ENCODE measurements at regions of chr11 and their contacts with region 1.

Region 1: GRCh38 chr11:78465169-78465942 is 47.7 kb upstream of the GAB2 start:
- DNase-seq: peak; percentile 93
- ATAC-seq: peak; percentile 100
- H3K4me3 ChIP-seq: peak overlapping the region; percentile 35; the same call in 1 of the 2 replicates
- H3K27ac ChIP-seq: peak overlapping the region; percentile 90
- H3K4me1 ChIP-seq: peaks cover 26% of the 10 kb centered on the region
- H3K27me3 ChIP-seq: no peaks in the 10 kb centered on the region
- CTCF ChIP-seq: no peak
- EP300 ChIP-seq: peak; percentile 63 to 84
- POLR2A ChIP-seq: peak; percentile 78
- RAD21 ChIP-seq: no peak

Region 2: DNA sequence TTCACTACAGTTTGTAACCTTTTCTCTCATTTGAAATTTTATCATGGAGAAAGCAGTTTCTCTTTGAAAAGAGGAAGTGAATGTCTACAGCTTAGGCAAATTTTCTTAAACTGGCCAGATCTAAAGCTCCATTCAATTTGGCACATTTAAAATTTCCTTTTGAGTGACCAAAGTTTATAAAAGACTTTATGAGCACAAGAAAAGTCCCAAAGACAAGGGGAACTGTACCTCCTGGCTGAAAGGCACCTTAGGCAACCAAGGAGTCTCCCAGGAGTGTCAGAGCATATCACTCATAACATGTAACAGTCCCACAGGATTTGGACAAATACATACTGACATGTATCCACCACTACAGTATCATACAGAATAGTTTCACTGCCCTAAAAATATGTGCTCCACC is 68.0 kb after region 1 on chr11:
- CTCF ChIA-PET with region 1: interaction called, 4 read pairs
- POLR2A ChIA-PET with region 1: interaction called, 5 read pairs
- RAD21 ChIA-PET with region 1: interaction called, 10 read pairs
- SMC1A ChIA-PET with region 1: interaction called, 7 read pairs
- in situ Hi-C with region 1: no loop called
- intact Hi-C with region 1: no loop called
- DNase-seq: peak; percentile 44
- ATAC-seq: peak; percentile 86
- H3K4me3 ChIP-seq: no peak overlapping the region
- H3K27ac ChIP-seq: peak overlapping the region; percentile 74
- H3K4me1 ChIP-seq: peaks cover 21% of the 10 kb centered on the region
- H3K27me3 ChIP-seq: no peaks in the 10 kb centered on the region
- CTCF ChIP-seq: no peak
- EP300 ChIP-seq: no peak
- POLR2A ChIP-seq: no peak
- RAD21 ChIP-seq: no peak

Region 3: GRCh38 chr11:78615719-78616118 is 150.4 kb after region 1 on chr11:
- CTCF ChIA-PET with region 1: no interaction called
- POLR2A ChIA-PET with region 1: no interaction called
- RAD21 ChIA-PET with region 1: no interaction called
- SMC1A ChIA-PET with region 1: no interaction called
- in situ Hi-C with region 1: no loop called
- intact Hi-C with region 1: no loop called
- DNase-seq: no peak
- ATAC-seq: no peak
- H3K4me3 ChIP-seq: no peak overlapping the region
- H3K27ac ChIP-seq: no peak overlapping the region
- H3K4me1 ChIP-seq: no peaks in the 10 kb centered on the region
- H3K27me3 ChIP-seq: no peaks in the 10 kb centered on the region
- CTCF ChIP-seq: no peak
- EP300 ChIP-seq: no peak
- POLR2A ChIP-seq: no peak
- RAD21 ChIP-seq: no peak